ENCODE measurements at regions of chr14 and their contacts with region 1.

Region 1: DNA sequence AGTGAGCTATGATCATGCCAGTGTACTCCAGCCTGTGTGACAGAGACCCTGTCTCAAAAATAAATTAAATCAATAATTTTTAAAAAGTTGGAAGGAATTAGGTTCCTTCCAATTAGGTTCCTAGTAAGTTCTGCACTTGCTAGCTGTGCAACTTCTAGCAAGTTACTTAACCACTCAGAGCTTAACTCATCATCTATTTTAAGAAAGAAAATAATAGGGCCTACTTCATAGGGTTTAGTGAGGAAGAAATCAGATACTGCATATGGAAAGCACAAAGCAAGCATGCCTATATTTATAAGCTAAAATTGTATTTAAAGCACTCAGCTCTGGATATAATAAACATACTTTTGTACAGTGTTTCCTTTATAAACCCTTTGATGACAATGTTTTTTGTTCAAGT is 10.7 kb downstream of the FOXN3 start:
- DNase-seq: no peak

Region 2: DNA sequence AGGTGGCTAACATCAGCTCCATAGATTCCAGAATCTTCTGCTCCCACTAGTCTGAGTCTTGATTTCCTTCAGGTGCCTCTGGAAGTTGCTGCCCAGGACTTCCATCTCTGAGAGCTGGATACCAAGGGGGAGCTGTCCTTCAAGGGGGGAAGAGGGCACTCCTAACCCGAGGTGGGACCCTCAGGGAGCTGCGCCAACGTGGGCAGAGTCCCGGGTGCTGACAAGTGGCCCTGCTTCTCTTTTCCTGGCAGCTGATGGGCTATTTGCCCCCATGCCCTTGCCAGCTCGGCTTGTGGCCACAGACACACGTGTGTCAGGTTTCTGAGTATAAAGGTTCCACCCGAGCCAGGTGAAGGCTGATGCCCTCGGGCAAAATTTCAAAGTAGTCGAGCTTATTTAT is 309.4 kb before region 1 on chr14:
- CTCF ChIA-PET with region 1: interaction called, 11 read pairs
- POLR2A ChIA-PET with region 1: no interaction called
- DNase-seq: no peak

Measured in HEK293T (cell line).